ENCODE measurements at regions of chr4 and their contacts with region 1.

Region 1: DNA sequence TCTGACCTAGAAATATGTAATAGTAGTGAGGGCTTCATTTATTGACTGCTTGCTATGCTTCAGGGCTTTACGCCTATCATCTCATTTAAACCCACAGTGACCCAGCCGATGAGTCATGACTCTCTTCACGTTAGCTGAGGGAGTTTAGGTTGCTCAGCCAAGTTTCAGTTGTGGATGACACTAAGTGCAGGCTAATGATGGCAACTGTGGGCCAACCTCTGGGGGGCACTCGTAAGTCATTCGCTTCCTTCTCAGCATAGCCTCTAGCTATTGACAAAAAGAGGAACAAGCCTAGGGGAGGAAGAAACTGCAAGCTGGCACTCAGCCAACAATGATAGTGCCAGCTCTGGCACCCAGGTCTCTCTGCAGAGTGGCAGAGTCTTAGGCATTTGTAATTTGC is 325.0 kb downstream of the ARHGAP10 start:
- DNase-seq: peak; percentile 45
- ATAC-seq: peak; percentile 94
- H3K4me3 Mint-ChIP-seq: peak overlapping the region; percentile 2
- H3K27ac Mint-ChIP-seq: no peak overlapping the region
- H3K4me1 Mint-ChIP-seq: peaks cover 50% of the 10 kb centered on the region
- H3K27me3 Mint-ChIP-seq: peaks cover 4% of the 10 kb centered on the region
- CTCF ChIP-seq: no peak

Region 2: DNA sequence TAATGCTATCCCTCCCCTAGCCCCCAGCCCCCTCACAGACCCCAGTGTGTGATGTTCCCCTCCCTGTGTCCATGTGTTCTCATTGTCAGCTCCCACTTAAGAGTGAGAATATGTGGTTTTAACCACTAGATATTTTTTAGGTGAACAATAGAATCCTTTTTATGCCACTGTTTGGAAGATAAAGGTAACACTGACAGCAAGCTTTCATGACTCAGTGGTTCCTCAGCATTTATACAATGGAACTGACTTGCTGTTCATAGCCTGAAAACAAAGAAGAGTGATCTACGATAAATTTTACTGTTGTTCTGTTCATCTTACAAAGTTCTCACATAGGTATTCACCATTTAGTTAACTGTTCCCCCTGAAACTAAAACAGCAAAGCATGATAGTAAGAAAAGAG is 177.2 kb before region 1 on chr4:
- CTCF ChIA-PET with region 1: no interaction called
- POLR2A ChIA-PET with region 1: no interaction called
- intact Hi-C with region 1: no loop called
- DNase-seq: no peak
- ATAC-seq: no peak
- H3K4me3 Mint-ChIP-seq: no peak overlapping the region
- H3K27ac Mint-ChIP-seq: no peak overlapping the region
- H3K4me1 Mint-ChIP-seq: no peaks in the 10 kb centered on the region
- H3K27me3 Mint-ChIP-seq: no peaks in the 10 kb centered on the region
- CTCF ChIP-seq: no peak

Region 3: GRCh38 chr4:148103597-148104355 is 46.9 kb after region 1 on chr4:
- CTCF ChIA-PET with region 1: no interaction called
- POLR2A ChIA-PET with region 1: no interaction called
- intact Hi-C with region 1: no loop called
- DNase-seq: no peak
- ATAC-seq: no peak
- H3K4me3 Mint-ChIP-seq: no peak overlapping the region
- H3K27ac Mint-ChIP-seq: no peak overlapping the region
- H3K4me1 Mint-ChIP-seq: no peaks in the 10 kb centered on the region
- H3K27me3 Mint-ChIP-seq: no peaks in the 10 kb centered on the region
- CTCF ChIP-seq: no peak

Region 4: GRCh38 chr4:148441986-148442831 is 385.3 kb after region 1 on chr4 and contains the start of gene NR3C2:
- CTCF ChIA-PET with region 1: interaction called, 3 read pairs
- POLR2A ChIA-PET with region 1: interaction called, 5 read pairs
- intact Hi-C with region 1: loop called (anchors 1 kb)
- DNase-seq: peak; percentile 81
- ATAC-seq: peak; percentile 83
- H3K4me3 Mint-ChIP-seq: peak within 1 kb of the TSS; percentile 92
- H3K27ac Mint-ChIP-seq: peak within 1 kb of the TSS; percentile 97
- H3K4me1 Mint-ChIP-seq: peaks cover 33% of the 10 kb centered on the region
- H3K27me3 Mint-ChIP-seq: peaks cover 2% of the 10 kb centered on the region
- CTCF ChIP-seq: no peak
- total RNA-seq, gene NR3C2: 3.9 and 4.5 TPM in 2 replicates

Region 5: DNA sequence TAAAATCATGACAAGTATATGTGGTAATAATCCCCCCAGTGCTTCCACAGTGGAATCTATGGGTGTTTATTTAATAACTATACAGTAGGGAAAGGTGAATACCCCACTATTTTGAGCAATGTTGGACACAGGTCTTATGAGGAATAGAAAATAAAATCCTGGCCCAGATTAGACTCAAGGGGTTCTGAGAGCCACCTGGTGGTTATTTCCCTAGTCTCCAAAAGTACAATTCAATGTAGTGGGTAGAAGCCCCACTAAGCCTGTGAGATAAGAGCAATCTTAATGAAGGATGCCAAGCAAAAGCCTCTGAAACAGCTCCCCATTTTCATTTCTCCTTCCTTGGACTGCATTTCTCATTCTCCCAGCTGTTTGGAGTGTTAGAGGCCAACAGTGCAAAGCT is 713.5 kb after region 1 on chr4:
- CTCF ChIA-PET with region 1: no interaction called
- POLR2A ChIA-PET with region 1: no interaction called
- intact Hi-C with region 1: loop called (anchors 2 kb)
- DNase-seq: no peak
- ATAC-seq: no peak
- H3K4me3 Mint-ChIP-seq: no peak overlapping the region
- H3K27ac Mint-ChIP-seq: no peak overlapping the region
- H3K4me1 Mint-ChIP-seq: no peaks in the 10 kb centered on the region
- H3K27me3 Mint-ChIP-seq: no peaks in the 10 kb centered on the region
- CTCF ChIP-seq: no peak

Region 6: DNA sequence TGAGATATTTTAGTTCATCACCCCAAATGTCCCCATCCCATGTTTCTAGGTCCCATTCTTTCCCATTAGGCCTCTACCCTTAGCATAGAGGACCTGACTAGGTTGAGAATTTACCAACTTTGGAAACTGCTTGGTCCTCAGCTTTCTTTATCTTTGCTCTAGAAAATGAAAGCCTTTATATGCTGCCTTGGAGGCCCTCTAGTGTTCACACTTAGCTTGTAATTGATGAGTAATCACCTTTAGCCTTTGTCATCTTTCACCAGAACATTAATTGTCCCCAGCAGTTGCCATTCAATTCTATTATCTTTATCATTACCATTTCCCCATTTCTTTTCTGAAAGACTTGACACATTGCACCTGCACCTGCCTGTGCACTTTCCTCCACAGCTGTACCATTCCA is 974.5 kb after region 1 on chr4:
- CTCF ChIA-PET with region 1: interaction called, 7 read pairs
- POLR2A ChIA-PET with region 1: no interaction called
- intact Hi-C with region 1: loop called (anchors 2 kb)
- DNase-seq: no peak
- ATAC-seq: no peak
- H3K4me3 Mint-ChIP-seq: no peak overlapping the region
- H3K27ac Mint-ChIP-seq: no peak overlapping the region
- H3K4me1 Mint-ChIP-seq: no peaks in the 10 kb centered on the region
- H3K27me3 Mint-ChIP-seq: no peaks in the 10 kb centered on the region
- CTCF ChIP-seq: no peak

Region 7: DNA sequence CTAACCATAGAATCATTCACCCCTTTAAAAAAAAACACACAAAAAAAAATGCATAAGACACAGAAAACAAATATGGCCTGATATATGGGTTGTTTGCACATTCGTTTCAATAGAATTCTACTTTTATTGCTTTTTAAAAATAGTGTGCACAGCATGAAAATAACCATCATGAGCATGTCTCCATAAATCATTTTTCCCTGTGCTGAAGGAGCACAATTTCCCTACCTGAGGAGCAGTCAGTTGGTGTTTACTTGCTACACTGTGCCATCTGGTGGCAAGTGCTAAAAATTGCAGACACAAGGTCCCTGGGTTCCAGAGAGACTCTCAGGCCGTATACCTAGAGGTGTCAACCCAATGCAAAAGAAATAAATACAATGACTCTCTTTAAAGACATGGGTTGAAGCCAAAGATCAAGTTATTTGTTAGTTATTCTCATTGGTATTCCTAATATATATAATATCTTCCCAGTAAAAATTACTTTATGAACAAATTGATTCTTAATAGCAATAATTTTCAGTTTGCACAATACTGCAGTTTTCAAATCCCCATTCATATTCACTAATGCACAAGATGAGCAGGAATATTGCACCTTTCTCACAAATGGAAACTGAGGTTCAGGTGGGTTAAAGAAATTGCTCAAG is 1207.3 kb after region 1 on chr4:
- CTCF ChIA-PET with region 1: interaction called, 8 read pairs
- POLR2A ChIA-PET with region 1: no interaction called
- intact Hi-C with region 1: loop called (anchors 1 kb)
- DNase-seq: no peak
- ATAC-seq: peak; percentile 34
- H3K4me3 Mint-ChIP-seq: no peak overlapping the region
- H3K27ac Mint-ChIP-seq: no peak overlapping the region
- H3K4me1 Mint-ChIP-seq: no peaks in the 10 kb centered on the region
- H3K27me3 Mint-ChIP-seq: no peaks in the 10 kb centered on the region
- CTCF ChIP-seq: no peak

Measured in activated B cell treated with CpG ODN at 0.5 μM for 24 hours (primary cell).